ENCODE measurements at regions of chr1 and their contacts with region 1.

Region 1: DNA sequence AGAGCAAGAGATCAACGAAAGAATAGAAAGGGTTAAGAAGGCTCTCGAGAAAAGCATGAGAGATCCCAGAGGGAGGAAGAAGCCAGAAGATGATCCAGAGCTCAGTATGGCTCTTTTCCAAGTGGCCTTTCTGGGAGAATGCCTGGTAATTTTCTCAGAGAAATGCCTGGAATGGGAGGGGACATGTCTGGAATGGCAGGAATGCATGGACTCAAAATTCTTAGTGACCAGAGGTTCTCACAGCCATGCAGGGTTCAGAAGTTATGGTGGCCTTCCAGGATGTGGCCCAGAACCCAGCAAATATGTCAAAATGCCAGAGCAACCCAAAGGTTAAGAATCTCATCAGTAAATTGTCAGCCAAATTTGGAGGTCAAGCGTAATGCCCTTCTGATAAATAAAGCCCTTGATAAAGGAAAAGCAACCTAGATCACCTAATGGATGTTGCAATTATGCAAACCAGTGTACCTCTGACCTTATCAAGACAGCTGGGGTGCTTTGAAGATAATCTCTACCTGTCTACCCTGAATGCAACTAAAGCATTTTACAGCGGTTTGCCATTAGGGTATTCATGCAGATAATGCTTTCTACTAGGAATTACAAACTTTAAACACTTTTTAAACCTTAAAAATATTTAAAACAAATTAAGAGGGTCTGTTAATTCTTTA is 53.1 kb downstream of the NBPF6 start:
- DNase-seq: no peak
- ATAC-seq: peak; percentile 64

Region 2: DNA sequence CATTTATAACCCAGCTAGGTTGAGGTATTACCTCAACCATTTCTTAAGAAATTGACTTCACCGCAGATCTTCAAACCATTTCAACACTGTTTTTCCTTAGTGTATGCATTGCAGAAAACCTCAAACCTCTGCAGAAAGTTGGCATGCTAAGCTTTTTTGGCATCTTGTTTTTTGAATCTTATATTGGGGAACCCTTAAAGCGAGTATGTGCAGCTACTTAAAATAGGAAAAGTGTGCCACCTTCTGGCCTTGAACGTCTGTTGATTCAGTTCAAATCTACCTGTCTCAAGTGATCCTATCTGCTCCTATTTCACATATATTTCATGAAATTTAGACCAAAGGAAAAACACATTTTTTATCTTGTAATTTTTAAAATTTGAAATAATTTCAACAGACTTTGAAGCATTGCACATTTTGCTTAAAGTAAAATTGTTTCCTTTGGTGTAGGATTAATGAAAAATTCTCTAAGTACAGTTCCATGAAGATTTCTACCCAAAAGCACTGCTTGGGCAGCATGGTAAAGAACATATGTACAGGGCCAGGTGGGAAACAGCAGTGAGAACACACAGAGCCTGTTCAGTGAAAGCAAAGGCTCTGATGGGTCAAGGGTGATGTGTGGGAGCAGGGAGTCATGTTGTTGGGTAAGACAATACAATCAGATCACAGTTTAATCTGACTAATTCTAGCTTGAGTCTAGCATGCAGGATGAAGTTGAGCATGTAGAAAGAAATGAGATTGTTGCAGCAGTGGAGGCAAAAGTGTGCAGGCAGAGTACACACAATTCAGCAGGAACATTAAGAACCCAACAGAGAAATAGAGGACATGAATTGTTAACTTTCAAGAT is 140.5 kb after region 1 on chr1:
- intact Hi-C with region 1: loop called (anchors 10 kb)
- DNase-seq: peak; percentile 67
- ATAC-seq: peak; percentile 68

Measured in sciatic nerve (tissue), 2 donors.